Activated CD8-positive, alpha-beta T cell treated with anti-CD3 and anti-CD28 coated beads, Interleukin-2, amount 10 ng/mL, durations not matched to agents 7 days and 5 days (primary cell): ENCODE measurements at regions of chr22 and their contacts with region 1.

Region 1: DNA sequence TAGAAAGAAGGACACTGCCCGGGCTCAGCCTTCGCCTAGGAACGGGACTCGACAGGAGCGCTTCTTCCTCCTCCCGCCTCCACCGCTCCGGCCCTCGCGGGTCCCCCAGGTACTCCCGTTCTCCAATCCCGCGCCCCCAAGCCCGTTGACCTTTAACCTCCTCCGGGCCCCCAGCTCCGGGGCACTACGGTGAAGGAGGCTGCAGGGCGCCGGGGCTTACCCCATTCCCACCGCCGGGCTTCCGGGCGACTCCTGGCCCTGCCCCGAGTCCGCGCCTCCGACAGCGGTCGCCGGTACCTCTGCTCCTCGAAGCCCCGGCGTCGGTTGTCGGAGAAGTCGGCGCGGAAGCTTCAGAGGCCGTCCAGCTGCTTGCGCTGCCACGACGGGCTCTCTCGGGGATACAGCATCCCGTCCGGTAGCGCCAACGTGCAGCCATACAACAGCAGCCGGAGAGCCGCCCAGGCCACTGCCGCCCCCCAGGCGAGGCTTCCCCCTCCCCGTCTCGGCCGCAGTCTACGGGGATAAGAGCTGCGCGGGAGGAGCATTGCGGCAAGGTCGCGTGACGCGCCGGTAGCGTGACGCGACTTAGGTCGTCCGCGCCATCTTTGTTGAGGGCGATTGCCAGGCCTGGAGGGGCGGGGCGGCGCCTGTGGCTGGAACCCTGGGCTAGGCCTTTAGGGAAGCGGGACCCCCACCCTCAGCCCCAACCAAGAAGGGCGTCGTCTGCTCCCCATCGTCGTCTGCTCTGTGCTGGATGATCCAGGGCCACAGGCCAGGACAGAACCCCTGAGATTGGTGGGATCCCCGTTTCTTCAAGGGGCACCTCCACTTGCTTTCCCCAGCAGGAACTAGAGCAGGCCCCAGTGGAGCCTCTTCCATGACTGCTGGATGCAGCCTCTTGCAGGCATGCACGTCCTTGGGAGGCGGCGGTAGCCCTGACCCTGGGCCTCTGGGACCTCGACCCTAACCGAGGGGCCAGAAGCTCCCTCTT is 26.3 kb downstream of the RGL4 start:
- DNase-seq: peak; percentile 86
- ATAC-seq: peak; percentile 91
- H3K4me3 Mint-ChIP-seq: peak overlapping the region; percentile 75
- H3K27ac Mint-ChIP-seq: peak overlapping the region; percentile 81
- H3K4me1 Mint-ChIP-seq: peaks cover 20% of the 10 kb centered on the region
- H3K27me3 Mint-ChIP-seq: no peaks in the 10 kb centered on the region

Region 2: DNA sequence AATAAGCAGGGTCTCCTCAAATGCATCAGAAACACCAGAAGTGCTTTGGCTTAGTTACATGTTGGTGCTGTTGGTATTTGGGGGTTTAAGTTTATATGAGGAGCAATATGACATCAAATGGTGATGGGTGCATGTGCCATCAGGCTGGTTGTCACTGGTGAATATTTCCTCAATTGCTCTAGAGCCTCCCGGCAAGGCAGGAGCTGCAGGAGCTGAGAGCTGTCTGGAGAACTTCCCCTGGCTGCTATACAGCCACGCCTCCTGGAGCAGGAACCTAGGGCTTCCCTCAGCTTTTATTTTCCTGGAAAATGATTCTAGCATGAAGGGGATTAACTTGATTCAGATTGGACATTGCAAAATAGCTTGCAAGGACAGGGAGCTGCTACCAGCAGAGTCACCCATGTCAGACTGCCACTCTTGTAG is 813.7 kb before region 1 on chr22:
- CTCF ChIA-PET with region 1: no interaction called
- POLR2A ChIA-PET with region 1: no interaction called
- DNase-seq: no peak
- ATAC-seq: no peak
- H3K4me3 Mint-ChIP-seq: no peak overlapping the region
- H3K27ac Mint-ChIP-seq: no peak overlapping the region
- H3K4me1 Mint-ChIP-seq: no peaks in the 10 kb centered on the region
- H3K27me3 Mint-ChIP-seq: peaks cover 8% of the 10 kb centered on the region

Region 3: GRCh38 chr22:23696326-23696851 is 20.7 kb before region 1 on chr22:
- CTCF ChIA-PET with region 1: interaction called, 11 read pairs
- POLR2A ChIA-PET with region 1: interaction called, 41 read pairs
- DNase-seq: peak; percentile 92
- ATAC-seq: peak; percentile 100
- H3K4me3 Mint-ChIP-seq: peak overlapping the region; percentile 98
- H3K27ac Mint-ChIP-seq: peak overlapping the region; percentile 100
- H3K4me1 Mint-ChIP-seq: peaks cover 42% of the 10 kb centered on the region
- H3K27me3 Mint-ChIP-seq: no peaks in the 10 kb centered on the region